ENCODE measurements at regions of chr14 and their contacts with region 1.

Region 1: GRCh38 chr14:56491299-56492285 is 88.0 kb upstream of the TMEM260 start:
- H3K4me3 ChIP-seq: no peak overlapping the region
- H3K27ac ChIP-seq: no peak overlapping the region
- H3K4me1 ChIP-seq: no peaks in the 10 kb centered on the region
- CTCF ChIP-seq: peak; percentile 26; the same call in 1 of the 2 replicates

Region 2: DNA sequence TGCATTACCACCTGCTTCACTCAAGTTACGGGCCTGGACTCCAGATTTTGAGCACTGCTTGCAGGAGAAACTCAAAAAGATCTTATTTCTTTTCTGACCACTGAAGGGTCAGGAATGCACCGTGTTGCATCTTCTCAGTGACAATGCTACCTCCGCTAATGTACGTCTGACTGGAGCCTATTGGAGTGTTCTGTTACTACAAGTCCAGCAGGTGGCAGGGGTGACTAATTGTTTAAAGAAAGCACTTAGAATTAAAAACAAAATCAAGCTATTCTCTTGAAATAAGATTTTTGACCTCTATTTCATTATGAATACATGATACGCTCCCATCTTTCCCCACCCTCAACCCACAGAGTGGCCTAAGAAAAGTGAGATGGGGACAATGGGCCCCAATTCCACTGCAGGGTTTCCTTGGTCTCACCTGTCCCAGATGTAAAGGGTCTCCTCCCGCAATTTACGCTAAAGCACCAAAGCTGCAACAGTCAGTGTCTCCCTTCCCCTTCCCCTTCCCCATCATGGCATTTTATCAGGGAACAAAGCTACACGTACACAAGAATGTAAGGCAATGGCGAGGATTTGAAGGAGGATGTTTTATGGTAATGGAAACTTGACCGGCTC is 1053.4 kb before region 1 on chr14:
- CTCF ChIA-PET with region 1: interaction called, 15 read pairs
- POLR2A ChIA-PET with region 1: no interaction called
- H3K4me3 ChIP-seq: no peak overlapping the region
- H3K27ac ChIP-seq: no peak overlapping the region
- H3K4me1 ChIP-seq: no peaks in the 10 kb centered on the region
- CTCF ChIP-seq: no peak

Region 3: GRCh38 chr14:56474419-56475022 is 17.1 kb before region 1 on chr14:
- CTCF ChIA-PET with region 1: interaction called, 13 read pairs
- POLR2A ChIA-PET with region 1: no interaction called
- H3K4me3 ChIP-seq: no peak overlapping the region
- H3K27ac ChIP-seq: no peak overlapping the region
- H3K4me1 ChIP-seq: no peaks in the 10 kb centered on the region
- CTCF ChIP-seq: peak; percentile 38; the same call in 1 of the 2 replicates

Region 4: GRCh38 chr14:56514663-56515371 is 23.2 kb after region 1 on chr14:
- CTCF ChIA-PET with region 1: interaction called, 14 read pairs
- POLR2A ChIA-PET with region 1: no interaction called
- H3K4me3 ChIP-seq: no peak overlapping the region
- H3K27ac ChIP-seq: no peak overlapping the region
- H3K4me1 ChIP-seq: no peaks in the 10 kb centered on the region
- CTCF ChIP-seq: no peak

Region 5: DNA sequence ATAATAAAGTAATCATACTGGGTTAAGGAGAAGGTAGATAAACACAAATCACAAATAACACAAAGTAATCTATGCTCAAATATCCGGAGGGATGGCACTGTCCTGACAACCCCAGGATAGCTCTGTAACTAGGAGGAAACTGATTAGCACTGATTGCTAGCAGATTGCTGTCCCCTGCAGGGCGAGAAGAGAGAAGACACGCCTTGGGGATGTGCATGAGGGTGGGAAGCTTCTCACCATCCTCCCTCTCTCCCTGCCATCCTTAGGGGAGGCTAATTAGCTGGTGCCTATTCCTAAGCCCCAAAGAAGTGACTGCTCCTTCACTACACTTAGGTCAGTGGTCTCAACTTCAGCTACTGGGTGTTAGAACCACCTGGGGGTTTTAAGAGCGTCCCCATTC is 61.0 kb after region 1 on chr14:
- CTCF ChIA-PET with region 1: interaction called, 13 read pairs
- POLR2A ChIA-PET with region 1: no interaction called
- H3K4me3 ChIP-seq: no peak overlapping the region
- H3K27ac ChIP-seq: no peak overlapping the region
- H3K4me1 ChIP-seq: no peaks in the 10 kb centered on the region
- CTCF ChIP-seq: no peak

Region 6: GRCh38 chr14:57182760-57183503 is 691.3 kb after region 1 on chr14:
- CTCF ChIA-PET with region 1: interaction called, 25 read pairs
- POLR2A ChIA-PET with region 1: no interaction called
- H3K4me3 ChIP-seq: no peak overlapping the region
- H3K27ac ChIP-seq: no peak overlapping the region
- H3K4me1 ChIP-seq: no peaks in the 10 kb centered on the region
- CTCF ChIP-seq: 0 out of 2 replicates have a peak, but pooled peaks have one; percentile 23

Region 7: GRCh38 chr14:57317316-57317715 is 825.7 kb after region 1 on chr14:
- CTCF ChIA-PET with region 1: interaction called, 10 read pairs
- POLR2A ChIA-PET with region 1: no interaction called
- H3K4me3 ChIP-seq: no peak overlapping the region
- H3K27ac ChIP-seq: no peak overlapping the region
- H3K4me1 ChIP-seq: no peaks in the 10 kb centered on the region
- CTCF ChIP-seq: 0 out of 2 replicates have a peak, but pooled peaks have one; percentile 11